ENCODE measurements at regions of chr2 and their contacts with region 1.

Region 1: GRCh38 chr2:47767880-47768609 is 14.9 kb upstream of the MSH6 start:
- DNase-seq: peak; percentile 32 to 82 (median 68)
- ATAC-seq: peak; percentile 93
- H3K4me3 ChIP-seq: no peak overlapping the region
- H3K4me3 Mint-ChIP-seq: peak overlapping the region in 7 of 10 donors; percentile 11 to 72 (median 49)
- H3K27ac ChIP-seq: no peak overlapping the region
- H3K27ac Mint-ChIP-seq: no peak overlapping the region
- H3K4me1 ChIP-seq: no peaks in the 10 kb centered on the region
- H3K4me1 Mint-ChIP-seq: peaks cover 0 to 8% (median 4%) of the 10 kb centered on the region in 7 donors
- H3K27me3 ChIP-seq: no peaks in the 10 kb centered on the region
- H3K27me3 Mint-ChIP-seq: peaks cover 0 to 5% (median 0%) of the 10 kb centered on the region in 5 donors

Region 2: DNA sequence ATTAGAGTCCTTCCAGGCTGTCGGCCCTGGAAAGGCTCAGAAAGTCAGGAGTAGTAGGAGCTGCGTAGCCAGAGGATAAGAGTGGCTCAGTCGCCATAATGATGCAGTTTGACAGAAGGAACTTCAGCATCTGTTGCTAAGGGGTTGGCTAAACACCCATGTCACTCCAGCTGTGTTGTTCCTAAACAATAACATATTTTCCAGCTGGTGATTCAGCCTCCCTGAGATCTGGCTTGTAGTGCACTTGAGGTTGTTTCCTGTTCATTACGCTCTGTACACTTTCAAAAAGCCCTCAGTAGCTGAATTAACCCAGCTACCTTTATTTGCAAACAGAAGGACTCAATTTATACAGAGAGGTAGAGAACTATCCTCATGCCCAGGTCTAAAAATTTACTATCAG is 1510.6 kb before region 1 on chr2:
- CTCF ChIA-PET with region 1: no interaction called
- POLR2A ChIA-PET with region 1: no interaction called
- intact Hi-C with region 1: no loop called
- DNase-seq: no peak
- ATAC-seq: no peak
- H3K4me3 ChIP-seq: no peak overlapping the region
- H3K4me3 Mint-ChIP-seq: no peak overlapping the region
- H3K27ac ChIP-seq: no peak overlapping the region
- H3K27ac Mint-ChIP-seq: no peak overlapping the region
- H3K4me1 ChIP-seq: no peaks in the 10 kb centered on the region
- H3K4me1 Mint-ChIP-seq: peaks cover 0 to 4% (median 0%) of the 10 kb centered on the region in 7 donors
- H3K27me3 ChIP-seq: no peaks in the 10 kb centered on the region
- H3K27me3 Mint-ChIP-seq: peaks cover 0 to 14% (median 3%) of the 10 kb centered on the region in 5 donors

Region 3: GRCh38 chr2:47336259-47337238 is 431.5 kb before region 1 on chr2:
- CTCF ChIA-PET with region 1: interaction called, 83 read pairs
- POLR2A ChIA-PET with region 1: no interaction called
- intact Hi-C with region 1: loop called (anchors 1 kb)
- DNase-seq: no peak
- ATAC-seq: peak; percentile 63
- H3K4me3 ChIP-seq: no peak overlapping the region
- H3K4me3 Mint-ChIP-seq: no peak overlapping the region
- H3K27ac ChIP-seq: no peak overlapping the region
- H3K27ac Mint-ChIP-seq: peak overlapping the region in 1 of 9 donors; percentile 73
- H3K4me1 ChIP-seq: no peaks in the 10 kb centered on the region
- H3K4me1 Mint-ChIP-seq: peaks cover 0 to 4% (median 0%) of the 10 kb centered on the region in 7 donors
- H3K27me3 ChIP-seq: no peaks in the 10 kb centered on the region
- H3K27me3 Mint-ChIP-seq: peaks cover 0 to 18% (median 5%) of the 10 kb centered on the region in 5 donors

Region 4: DNA sequence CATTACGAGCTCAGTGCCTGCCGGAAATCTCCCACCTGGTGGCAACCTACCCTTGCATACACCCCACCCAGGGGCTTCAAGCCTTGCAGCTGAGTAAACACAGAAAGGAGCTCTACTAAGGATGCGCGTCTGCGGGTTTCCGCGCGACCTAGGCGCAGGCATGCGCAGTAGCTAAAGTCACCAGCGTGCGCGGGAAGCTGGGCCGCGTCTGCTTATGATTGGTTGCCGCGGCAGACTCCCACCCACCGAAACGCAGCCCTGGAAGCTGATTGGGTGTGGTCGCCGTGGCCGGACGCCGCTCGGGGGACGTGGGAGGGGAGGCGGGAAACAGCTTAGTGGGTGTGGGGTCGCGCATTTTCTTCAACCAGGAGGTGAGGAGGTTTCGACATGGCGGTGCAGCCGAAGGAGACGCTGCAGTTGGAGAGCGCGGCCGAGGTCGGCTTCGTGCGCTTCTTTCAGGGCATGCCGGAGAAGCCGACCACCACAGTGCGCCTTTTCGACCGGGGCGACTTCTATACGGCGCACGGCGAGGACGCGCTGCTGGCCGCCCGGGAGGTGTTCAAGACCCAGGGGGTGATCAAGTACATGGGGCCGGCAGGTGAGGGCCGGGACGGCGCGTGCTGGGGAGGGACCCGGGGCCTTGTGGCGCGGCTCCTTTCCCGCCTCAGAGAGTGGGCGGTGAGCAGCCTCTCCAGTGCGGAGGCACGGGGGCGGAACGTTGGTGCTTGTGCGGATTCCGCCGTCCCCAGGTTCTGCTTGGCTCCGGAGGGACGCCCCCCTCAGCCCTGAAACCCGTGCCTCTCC is 365.0 kb before region 1 on chr2 and contains the start of gene MSH2:
- CTCF ChIA-PET with region 1: no interaction called
- POLR2A ChIA-PET with region 1: no interaction called
- intact Hi-C with region 1: loop called in 1 of 2 experiments (anchors 1 kb)
- DNase-seq: peak; percentile 72 to 94 (median 91)
- ATAC-seq: peak; percentile 97
- H3K4me3 ChIP-seq: peak within 1 kb of the TSS; percentile 90
- H3K4me3 Mint-ChIP-seq: peak within 1 kb of the TSS; percentile 90 to 100 (median 98)
- H3K27ac ChIP-seq: peak within 1 kb of the TSS; percentile 77
- H3K27ac Mint-ChIP-seq: peak within 1 kb of the TSS; percentile 81 to 96 (median 91)
- H3K4me1 ChIP-seq: peaks cover 9 to 12% of the 10 kb centered on the region in 2 donors
- H3K4me1 Mint-ChIP-seq: peaks cover 32 to 49% (median 40%) of the 10 kb centered on the region in 7 donors
- H3K27me3 ChIP-seq: no peaks in the 10 kb centered on the region
- H3K27me3 Mint-ChIP-seq: peaks cover 0 to 2% (median 0%) of the 10 kb centered on the region in 5 donors
- total RNA-seq, gene MSH2: 12.2 to 44.7 (median 31.4) TPM

Region 5: GRCh38 chr2:47520825-47521665 is 247.0 kb before region 1 on chr2:
- CTCF ChIA-PET with region 1: no interaction called
- POLR2A ChIA-PET with region 1: no interaction called
- intact Hi-C with region 1: loop called (anchors 1 to 5 kb)
- DNase-seq: peak; percentile 43 to 79 (median 63)
- ATAC-seq: peak; percentile 91
- H3K4me3 ChIP-seq: peak overlapping the region; percentile 74
- H3K4me3 Mint-ChIP-seq: peak overlapping the region; percentile 90 to 99 (median 95)
- H3K27ac ChIP-seq: peak overlapping the region; percentile 15
- H3K27ac Mint-ChIP-seq: peak overlapping the region; percentile 82 to 96 (median 90)
- H3K4me1 ChIP-seq: peaks cover 0 to 4% of the 10 kb centered on the region in 2 donors
- H3K4me1 Mint-ChIP-seq: peaks cover 5 to 21% (median 20%) of the 10 kb centered on the region in 7 donors
- H3K27me3 ChIP-seq: no peaks in the 10 kb centered on the region
- H3K27me3 Mint-ChIP-seq: peaks cover 0 to 4% (median 0%) of the 10 kb centered on the region in 5 donors

Region 6: GRCh38 chr2:48107326-48107925 is 339.4 kb after region 1 on chr2:
- CTCF ChIA-PET with region 1: interaction called, 3 read pairs
- POLR2A ChIA-PET with region 1: no interaction called
- intact Hi-C with region 1: loop called (anchors 1 kb)
- DNase-seq: no peak
- ATAC-seq: no peak
- H3K4me3 ChIP-seq: no peak overlapping the region
- H3K4me3 Mint-ChIP-seq: no peak overlapping the region
- H3K27ac ChIP-seq: no peak overlapping the region
- H3K27ac Mint-ChIP-seq: no peak overlapping the region
- H3K4me1 ChIP-seq: peaks cover 0 to 3% of the 10 kb centered on the region in 2 donors
- H3K4me1 Mint-ChIP-seq: peaks cover 4 to 26% (median 17%) of the 10 kb centered on the region in 7 donors
- H3K27me3 ChIP-seq: no peaks in the 10 kb centered on the region
- H3K27me3 Mint-ChIP-seq: peaks cover 0 to 9% (median 0%) of the 10 kb centered on the region in 5 donors

Region 7: GRCh38 chr2:48272199-48272598 is 504.2 kb after region 1 on chr2:
- CTCF ChIA-PET with region 1: no interaction called
- POLR2A ChIA-PET with region 1: no interaction called
- intact Hi-C with region 1: no loop called
- DNase-seq: no peak
- ATAC-seq: no peak
- H3K4me3 ChIP-seq: no peak overlapping the region
- H3K4me3 Mint-ChIP-seq: no peak overlapping the region
- H3K27ac ChIP-seq: no peak overlapping the region
- H3K27ac Mint-ChIP-seq: no peak overlapping the region
- H3K4me1 ChIP-seq: no peaks in the 10 kb centered on the region
- H3K4me1 Mint-ChIP-seq: peaks cover 0 to 12% (median 5%) of the 10 kb centered on the region in 7 donors
- H3K27me3 ChIP-seq: no peaks in the 10 kb centered on the region
- H3K27me3 Mint-ChIP-seq: no peaks in the 10 kb centered on the region

Measured in naive thymus-derived CD4-positive, alpha-beta T cell (primary cell).